Dendritic cell treated with granulocyte-macrophage colony-stimulating factor and Interleukin-4, amounts not matched to agents 40 ng/mL and 50 ng/mL, for 4 days (primary cell): ENCODE measurements at regions of chr7 and their contacts with region 1.

Region 1: DNA sequence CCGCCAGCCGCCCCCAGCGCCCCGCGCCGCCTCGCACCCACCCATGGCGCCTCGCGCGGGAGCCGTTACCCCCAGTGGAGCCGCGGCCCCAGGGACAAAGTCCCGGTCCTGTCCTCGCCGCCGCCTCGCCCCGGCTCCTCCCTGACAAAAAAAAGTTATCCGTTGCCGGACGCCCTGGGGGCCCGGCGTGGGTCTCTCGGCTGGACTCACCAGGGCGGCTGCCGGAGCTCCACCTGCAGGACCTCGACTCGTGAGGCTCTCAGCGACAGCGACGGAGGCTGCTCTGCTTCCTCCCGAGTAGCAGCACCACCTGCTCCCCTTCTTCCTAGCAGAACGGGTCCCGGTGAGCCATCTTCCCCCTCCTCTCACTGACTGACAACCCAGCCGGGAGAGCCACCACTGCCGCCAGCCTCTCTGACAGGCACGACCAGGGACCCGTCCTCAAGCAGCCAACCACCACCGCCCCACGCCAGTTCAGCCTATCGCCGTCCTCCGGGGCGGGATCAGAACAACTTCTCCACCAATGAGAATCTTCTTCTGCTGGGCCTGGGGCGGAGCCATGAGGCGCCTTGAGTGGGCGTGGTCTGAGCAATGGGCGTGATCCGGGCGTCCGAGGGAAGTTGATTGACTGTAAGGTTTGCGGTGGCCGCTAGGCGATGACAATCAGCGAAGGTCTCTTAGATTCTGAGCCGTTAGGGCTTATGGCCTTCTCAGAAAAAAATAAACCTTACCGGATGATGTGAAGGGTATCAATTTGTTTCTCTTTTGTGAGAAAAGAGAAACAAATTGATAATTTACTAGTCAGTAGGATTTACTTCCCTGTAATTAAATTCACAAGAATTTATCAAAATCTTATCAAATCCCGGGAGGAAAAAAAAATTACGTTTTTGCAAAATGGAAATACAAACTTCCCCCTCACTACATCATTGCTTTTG is at the start of gene HYCC1:
- H3K4me3 Mint-ChIP-seq: peak within 1 kb of the TSS; percentile 91
- H3K27ac Mint-ChIP-seq: no peak within 1 kb of the TSS
- H3K4me1 Mint-ChIP-seq: peaks cover 41% of the 10 kb centered on the region
- H3K27me3 Mint-ChIP-seq: no peaks in the 10 kb centered on the region

Region 2: GRCh38 chr7:22992874-22993840 is 20.8 kb before region 1 on chr7:
- intact Hi-C with region 1: loop called (anchors 2 kb)
- H3K4me3 Mint-ChIP-seq: no peak overlapping the region
- H3K27ac Mint-ChIP-seq: peak overlapping the region; percentile 43
- H3K4me1 Mint-ChIP-seq: peaks cover 36% of the 10 kb centered on the region
- H3K27me3 Mint-ChIP-seq: no peaks in the 10 kb centered on the region

Region 3: DNA sequence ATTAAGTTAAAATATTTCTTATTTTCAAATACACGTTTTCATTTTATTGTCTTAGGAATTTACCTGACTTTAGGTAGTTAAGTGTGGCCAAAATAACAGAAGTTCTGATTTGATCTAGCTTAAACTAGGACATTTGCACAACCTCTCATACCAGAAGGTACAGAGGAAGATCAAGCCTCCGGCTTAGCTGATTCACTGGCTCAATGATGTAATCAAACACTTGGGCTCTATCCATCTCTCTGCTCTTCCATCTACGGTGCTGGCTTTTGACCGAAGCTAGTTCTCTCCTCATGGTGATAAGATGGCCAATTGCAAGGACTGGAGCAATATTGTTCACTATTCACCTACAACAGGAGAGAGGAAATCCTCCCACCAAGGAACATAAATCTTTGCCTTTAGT is 12.2 kb after region 1 on chr7:
- intact Hi-C with region 1: loop called (anchors 2 kb)
- H3K4me3 Mint-ChIP-seq: no peak overlapping the region
- H3K27ac Mint-ChIP-seq: peak overlapping the region; percentile 57
- H3K4me1 Mint-ChIP-seq: peaks cover 46% of the 10 kb centered on the region
- H3K27me3 Mint-ChIP-seq: peaks cover 23% of the 10 kb centered on the region